H1 (cell line): ENCODE measurements at regions of chr17 and their contacts with region 1.

Region 1: GRCh38 chr17:11583306-11583992 is 14.8 kb upstream of the DNAH9 start:
- DNase-seq: no peak
- H3K4me3 ChIP-seq: no peak overlapping the region
- H3K27ac ChIP-seq: no peak overlapping the region
- H3K4me1 ChIP-seq: no peaks in the 10 kb centered on the region
- H3K27me3 ChIP-seq: no peaks in the 10 kb centered on the region
- CTCF ChIP-seq: peak in 1 of 3 experiments; percentile 6; a peak in 1 of 4 replicates
- EP300 ChIP-seq: no peak
- POLR2A ChIP-seq: no peak
- RAD21 ChIP-seq: no peak

Region 2: DNA sequence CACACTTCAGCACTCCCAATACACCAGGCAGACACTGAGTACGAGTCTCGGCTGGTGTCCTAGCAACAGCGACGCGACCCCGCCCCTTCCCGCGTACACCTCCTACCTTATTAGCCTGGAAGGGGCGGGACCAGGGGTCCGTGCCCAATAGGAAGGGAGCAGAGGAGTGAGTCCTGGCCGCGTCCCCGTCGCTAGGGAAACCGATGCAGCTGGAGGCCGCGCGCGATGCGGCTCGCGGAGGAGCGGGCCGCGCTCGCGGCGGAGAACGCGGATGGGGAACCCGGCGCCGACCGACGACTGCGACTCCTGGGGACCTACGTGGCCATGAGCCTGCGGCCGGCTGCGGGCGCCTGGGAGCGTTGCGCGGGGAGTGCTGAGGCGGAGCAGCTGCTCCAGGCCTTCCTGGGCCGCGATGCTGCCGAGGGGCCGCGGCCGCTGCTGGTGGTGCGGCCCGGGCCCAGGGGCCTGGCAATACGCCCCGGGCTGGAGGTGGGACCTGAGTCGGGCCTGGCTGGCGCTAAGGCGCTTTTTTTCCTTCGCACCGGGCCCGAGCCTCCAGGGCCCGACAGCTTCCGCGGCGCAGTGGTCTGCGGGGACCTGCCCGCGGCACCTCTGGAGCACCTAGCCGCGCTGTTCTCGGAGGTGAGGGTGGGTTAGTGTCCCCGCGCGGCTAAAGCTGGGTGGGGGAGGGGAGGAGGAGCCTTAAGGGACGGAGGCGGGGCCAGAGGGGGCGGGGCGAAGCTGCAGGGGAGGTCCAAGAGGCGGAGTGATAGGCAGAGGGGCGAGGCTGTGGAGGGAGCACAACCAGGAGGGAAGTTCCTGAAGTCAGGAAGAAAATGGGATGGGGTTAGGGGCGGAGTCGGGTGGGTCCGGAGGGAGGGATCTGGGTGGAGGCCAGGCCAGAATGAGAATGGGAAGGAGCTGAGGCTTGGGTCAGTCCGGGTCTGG is 15.1 kb after region 1 on chr17 and contains the start of gene DNAH9:
- CTCF ChIA-PET with region 1: interaction called, 23 read pairs
- POLR2A ChIA-PET with region 1: no interaction called
- DNase-seq: peak; percentile 78 to 96
- H3K4me3 ChIP-seq: peak within 1 kb of the TSS; percentile 43 to 69 (median 63)
- H3K27ac ChIP-seq: no peak within 1 kb of the TSS
- H3K4me1 ChIP-seq: peaks cover 0 to 4% (median 2%) of the 10 kb centered on the region in 4 experiments; a peak in 2 of 7 replicates
- H3K27me3 ChIP-seq: no peaks in the 10 kb centered on the region
- CTCF ChIP-seq: no peak
- EP300 ChIP-seq: no peak
- POLR2A ChIP-seq: no peak
- RAD21 ChIP-seq: no peak
- total RNA-seq, gene DNAH9: 0.65 and 0.86 TPM in 2 replicates

Region 3: DNA sequence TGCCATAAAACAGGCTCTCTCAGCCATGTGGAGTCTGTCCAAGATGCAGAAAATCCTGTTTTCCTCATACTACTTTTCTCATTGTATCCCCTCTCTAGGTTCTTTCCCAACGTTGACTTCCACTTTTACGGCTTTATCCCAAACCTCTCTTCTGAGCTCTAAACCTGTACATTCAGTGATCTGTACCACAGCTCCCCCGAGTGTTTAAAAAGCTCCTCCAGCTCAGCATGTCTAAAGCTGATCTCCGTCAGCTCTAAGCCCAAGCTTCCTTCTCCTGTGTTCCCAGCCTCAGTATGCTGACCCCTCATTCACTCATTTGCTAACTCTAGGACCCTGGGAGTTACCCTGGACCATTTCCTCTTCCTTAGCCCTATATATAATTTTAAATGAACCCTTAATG is 159.4 kb after region 1 on chr17:
- CTCF ChIA-PET with region 1: interaction called, 12 read pairs
- POLR2A ChIA-PET with region 1: no interaction called
- DNase-seq: no peak
- H3K4me3 ChIP-seq: no peak overlapping the region
- H3K27ac ChIP-seq: no peak overlapping the region
- H3K4me1 ChIP-seq: no peaks in the 10 kb centered on the region
- H3K27me3 ChIP-seq: no peaks in the 10 kb centered on the region
- CTCF ChIP-seq: peak in 2 of 3 experiments; percentile 58 to 71; a peak in 3 of 4 replicates
- EP300 ChIP-seq: no peak
- POLR2A ChIP-seq: no peak
- RAD21 ChIP-seq: peak; percentile 81 to 83